CD8-positive, alpha-beta T cell (primary cell): ENCODE measurements at regions of chr11 and their contacts with region 1.

Region 1: GRCh38 chr11:128039140-128040021 is 548.0 kb downstream of the ETS1 start:
- DNase-seq: peak; percentile 48 to 94 (median 79)
- ATAC-seq: peak; percentile 91
- H3K4me3 ChIP-seq: peak overlapping the region; percentile 40 to 50
- H3K4me3 Mint-ChIP-seq: peak overlapping the region; percentile 59
- H3K27ac ChIP-seq: peak overlapping the region; percentile 55 to 80
- H3K27ac Mint-ChIP-seq: peak overlapping the region; percentile 87
- H3K4me1 ChIP-seq: peaks cover 76% of the 10 kb centered on the region
- H3K4me1 Mint-ChIP-seq: peaks cover 56% of the 10 kb centered on the region
- H3K27me3 ChIP-seq: no peaks in the 10 kb centered on the region
- H3K27me3 Mint-ChIP-seq: no peaks in the 10 kb centered on the region
- CTCF ChIP-seq: peak; percentile 22

Region 2: GRCh38 chr11:127412722-127413380 is 626.5 kb before region 1 on chr11:
- CTCF ChIA-PET with region 1: no interaction called
- POLR2A ChIA-PET with region 1: no interaction called
- intact Hi-C with region 1: no loop called
- DNase-seq: no peak
- ATAC-seq: no peak
- H3K4me3 ChIP-seq: no peak overlapping the region
- H3K4me3 Mint-ChIP-seq: no peak overlapping the region
- H3K27ac ChIP-seq: no peak overlapping the region
- H3K27ac Mint-ChIP-seq: no peak overlapping the region
- H3K4me1 ChIP-seq: no peaks in the 10 kb centered on the region
- H3K4me1 Mint-ChIP-seq: no peaks in the 10 kb centered on the region
- H3K27me3 ChIP-seq: no peaks in the 10 kb centered on the region
- H3K27me3 Mint-ChIP-seq: no peaks in the 10 kb centered on the region
- CTCF ChIP-seq: no peak

Region 3: GRCh38 chr11:128052912-128053641 is 13.7 kb after region 1 on chr11:
- CTCF ChIA-PET with region 1: interaction called, 30 read pairs
- POLR2A ChIA-PET with region 1: interaction called, 44 read pairs
- intact Hi-C with region 1: loop called in 1 of 2 experiments (anchors 1 kb)
- DNase-seq: peak in 2 of 9 experiments; percentile 53 to 79
- ATAC-seq: peak; percentile 62
- H3K4me3 ChIP-seq: peak overlapping the region in 1 of 2 experiments; percentile 21
- H3K4me3 Mint-ChIP-seq: peak overlapping the region; percentile 67
- H3K27ac ChIP-seq: peak overlapping the region in 1 of 2 experiments; percentile 79
- H3K27ac Mint-ChIP-seq: peak overlapping the region; percentile 91
- H3K4me1 ChIP-seq: peaks cover 66% of the 10 kb centered on the region
- H3K4me1 Mint-ChIP-seq: peaks cover 82% of the 10 kb centered on the region
- H3K27me3 ChIP-seq: no peaks in the 10 kb centered on the region
- H3K27me3 Mint-ChIP-seq: no peaks in the 10 kb centered on the region
- CTCF ChIP-seq: no peak

Region 4: DNA sequence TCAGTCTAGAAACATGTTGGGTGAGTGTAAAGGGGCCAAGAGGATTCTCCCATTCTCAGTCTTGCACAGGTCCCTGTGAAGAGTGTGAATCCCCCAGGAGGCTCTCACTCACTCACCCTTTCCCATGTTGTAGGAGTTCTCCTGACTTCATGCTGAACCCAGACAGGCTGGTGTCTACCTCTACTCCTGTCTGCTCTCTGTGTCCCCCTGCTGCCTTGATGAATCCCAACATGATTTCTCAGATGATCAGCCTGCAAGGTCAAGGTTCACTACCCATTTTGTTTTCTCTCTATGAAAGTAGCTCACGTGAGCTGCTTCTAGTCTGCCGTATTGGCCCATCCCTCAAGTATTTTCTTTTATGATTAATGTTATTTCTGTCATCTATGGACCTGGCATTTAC is 47.4 kb after region 1 on chr11:
- CTCF ChIA-PET with region 1: interaction called, 5 read pairs
- POLR2A ChIA-PET with region 1: interaction called, 7 read pairs
- intact Hi-C with region 1: loop called in 1 of 2 experiments (anchors 1 kb)
- DNase-seq: peak in 3 of 9 experiments; percentile 24 to 61 (median 47)
- ATAC-seq: peak; percentile 62
- H3K4me3 ChIP-seq: no peak overlapping the region
- H3K4me3 Mint-ChIP-seq: no peak overlapping the region
- H3K27ac ChIP-seq: no peak overlapping the region
- H3K27ac Mint-ChIP-seq: no peak overlapping the region
- H3K4me1 ChIP-seq: peaks cover 25% of the 10 kb centered on the region
- H3K4me1 Mint-ChIP-seq: peaks cover 45% of the 10 kb centered on the region
- H3K27me3 ChIP-seq: no peaks in the 10 kb centered on the region
- H3K27me3 Mint-ChIP-seq: no peaks in the 10 kb centered on the region
- CTCF ChIP-seq: no peak

Region 5: DNA sequence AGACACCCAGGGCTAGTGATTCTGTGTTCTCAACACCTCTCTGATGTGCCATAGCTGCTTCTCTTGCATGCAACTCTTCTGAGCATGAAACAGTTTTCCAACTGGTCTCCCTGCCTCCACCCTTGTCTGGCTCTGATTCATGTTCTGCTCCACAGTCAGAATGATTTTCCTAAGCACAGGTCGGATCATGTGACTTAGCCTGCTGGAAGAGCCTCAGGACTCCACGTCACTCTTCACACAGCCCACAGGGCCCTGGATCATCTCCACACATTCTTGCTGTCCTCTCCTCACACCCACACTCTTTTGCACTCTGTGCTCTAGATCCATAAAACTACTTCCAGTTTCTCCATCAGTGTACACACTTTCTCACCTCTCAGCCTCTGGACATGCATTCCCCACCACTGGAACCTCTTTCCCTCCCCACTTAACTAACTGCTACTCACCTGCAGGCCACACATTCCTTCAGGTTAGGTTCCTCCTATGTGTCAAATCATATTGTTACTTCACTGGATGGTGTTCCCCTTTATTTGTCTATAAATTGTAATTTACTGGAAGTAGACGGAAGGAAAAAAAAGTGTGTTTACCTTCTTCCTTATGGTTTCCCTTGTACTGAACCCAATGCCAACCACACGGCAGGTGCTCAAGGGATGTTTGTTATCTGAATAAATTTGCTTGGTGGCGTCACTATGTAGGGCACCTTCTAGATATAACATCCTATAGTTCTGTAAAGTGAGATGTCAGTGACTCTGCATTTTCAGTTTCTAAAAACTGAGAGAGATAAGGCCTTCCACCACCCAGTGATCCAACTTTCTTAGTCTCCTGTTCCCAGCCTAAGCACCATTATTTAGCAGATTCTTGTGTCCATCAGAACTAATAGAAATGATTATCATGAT is 414.3 kb after region 1 on chr11:
- CTCF ChIA-PET with region 1: no interaction called
- POLR2A ChIA-PET with region 1: no interaction called
- intact Hi-C with region 1: loop called in 1 of 2 experiments (anchors 10 kb)
- DNase-seq: peak in 1 of 9 experiments; percentile 19
- ATAC-seq: peak; percentile 63
- H3K4me3 ChIP-seq: no peak overlapping the region
- H3K4me3 Mint-ChIP-seq: no peak overlapping the region
- H3K27ac ChIP-seq: peak overlapping the region in 1 of 2 experiments; percentile 32
- H3K27ac Mint-ChIP-seq: peak overlapping the region; percentile 91
- H3K4me1 ChIP-seq: peaks cover 25% of the 10 kb centered on the region
- H3K4me1 Mint-ChIP-seq: peaks cover 76% of the 10 kb centered on the region
- H3K27me3 ChIP-seq: no peaks in the 10 kb centered on the region
- H3K27me3 Mint-ChIP-seq: no peaks in the 10 kb centered on the region
- CTCF ChIP-seq: no peak

Region 6: DNA sequence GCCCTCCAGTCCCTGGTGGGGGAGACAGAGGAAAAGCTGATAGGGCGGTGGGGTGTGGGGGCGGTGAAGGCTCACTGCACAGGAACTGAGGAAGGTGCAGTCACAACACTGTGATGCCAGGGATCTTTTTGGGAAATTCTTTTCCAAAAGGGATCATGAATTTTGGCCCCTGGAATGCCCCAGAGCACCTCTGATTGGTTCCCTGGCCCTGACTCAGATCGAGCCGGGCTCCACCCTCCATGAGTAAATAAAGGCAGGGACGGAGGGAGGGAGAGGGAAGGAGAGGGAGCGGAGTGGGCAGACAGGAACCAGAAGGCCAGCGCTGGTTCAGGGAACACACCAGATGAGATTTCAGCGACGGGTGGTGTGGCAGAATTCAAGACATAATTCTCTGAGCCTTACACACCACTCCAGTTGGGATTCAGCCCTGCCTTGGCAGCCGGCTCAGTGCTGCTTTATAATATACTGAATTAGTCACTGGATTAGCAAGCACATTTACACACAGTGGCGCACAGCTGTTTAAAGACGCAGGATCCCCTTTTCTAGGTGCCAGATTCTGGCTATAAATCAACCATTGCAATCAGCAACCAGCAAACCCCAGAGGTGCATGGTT is 467.7 kb after region 1 on chr11:
- CTCF ChIA-PET with region 1: no interaction called
- POLR2A ChIA-PET with region 1: no interaction called
- intact Hi-C with region 1: loop called in 1 of 2 experiments (anchors 10 kb)
- DNase-seq: peak in 4 of 9 experiments; percentile 51 to 65 (median 60)
- ATAC-seq: peak; percentile 30
- H3K4me3 ChIP-seq: peak overlapping the region; percentile 37 to 94
- H3K4me3 Mint-ChIP-seq: peak overlapping the region; percentile 84
- H3K27ac ChIP-seq: peak overlapping the region; percentile 48 to 75
- H3K27ac Mint-ChIP-seq: peak overlapping the region; percentile 98
- H3K4me1 ChIP-seq: peaks cover 100% of the 10 kb centered on the region
- H3K4me1 Mint-ChIP-seq: peaks cover 97% of the 10 kb centered on the region
- H3K27me3 ChIP-seq: no peaks in the 10 kb centered on the region
- H3K27me3 Mint-ChIP-seq: no peaks in the 10 kb centered on the region
- CTCF ChIP-seq: no peak

Region 7: DNA sequence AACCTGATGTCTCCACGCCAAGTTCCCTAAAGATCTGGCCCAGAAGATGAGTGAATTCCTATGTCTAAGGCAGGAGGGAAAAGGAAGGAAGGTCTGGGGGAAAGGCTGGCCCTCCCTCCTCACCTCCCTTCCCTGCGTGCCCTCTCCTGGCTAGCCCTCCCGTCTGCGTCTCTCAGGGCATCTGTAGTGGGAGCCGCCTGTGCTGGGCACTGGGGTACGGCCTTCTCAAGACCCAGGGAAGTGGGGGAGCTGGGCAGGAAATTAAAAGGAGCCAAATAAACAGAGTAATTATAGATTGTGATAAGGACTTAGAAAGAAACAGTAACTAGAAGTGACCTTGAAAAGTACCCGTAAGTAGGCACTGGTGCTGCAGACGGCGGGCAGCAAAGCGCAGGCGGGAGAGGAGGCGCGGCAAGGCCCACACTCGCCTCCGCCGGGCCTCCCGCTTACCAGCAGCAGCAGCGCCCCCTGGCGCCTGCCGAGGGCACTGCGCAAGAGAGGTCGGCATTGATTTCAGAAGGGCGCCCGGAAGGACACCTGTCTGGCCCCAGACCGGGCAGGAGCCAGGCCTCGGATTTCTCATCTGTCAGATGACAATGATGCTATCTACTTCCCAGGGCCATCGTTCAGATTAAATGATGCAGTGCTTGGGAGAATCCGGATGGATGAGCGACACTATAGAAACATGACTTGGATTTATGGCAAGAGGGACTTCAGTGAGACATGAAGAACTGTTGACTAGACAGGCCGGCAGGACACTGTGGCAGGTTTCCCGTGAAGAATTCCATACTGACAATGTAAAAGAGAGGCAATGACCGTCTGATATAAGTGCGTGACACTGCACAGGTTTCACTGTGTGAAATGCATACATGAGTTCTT is 820.4 kb after region 1 on chr11:
- CTCF ChIA-PET with region 1: interaction called, 4 read pairs
- POLR2A ChIA-PET with region 1: no interaction called
- intact Hi-C with region 1: loop called in 1 of 2 experiments (anchors 5 kb)
- DNase-seq: peak; percentile 64 to 83 (median 75)
- ATAC-seq: peak; percentile 97
- H3K4me3 ChIP-seq: no peak overlapping the region
- H3K4me3 Mint-ChIP-seq: no peak overlapping the region
- H3K27ac ChIP-seq: no peak overlapping the region
- H3K27ac Mint-ChIP-seq: no peak overlapping the region
- H3K4me1 ChIP-seq: no peaks in the 10 kb centered on the region
- H3K4me1 Mint-ChIP-seq: peaks cover 4% of the 10 kb centered on the region
- H3K27me3 ChIP-seq: no peaks in the 10 kb centered on the region
- H3K27me3 Mint-ChIP-seq: peaks cover 2% of the 10 kb centered on the region
- CTCF ChIP-seq: peak; percentile 99

Region 8: GRCh38 chr11:128956401-128957201 is 917.2 kb after region 1 on chr11:
- CTCF ChIA-PET with region 1: no interaction called
- POLR2A ChIA-PET with region 1: no interaction called
- intact Hi-C with region 1: loop called in 1 of 2 experiments (anchors 5 kb)
- DNase-seq: peak in 3 of 9 experiments; percentile 12 to 66 (median 59)
- ATAC-seq: no peak
- H3K4me3 ChIP-seq: no peak overlapping the region
- H3K4me3 Mint-ChIP-seq: no peak overlapping the region
- H3K27ac ChIP-seq: no peak overlapping the region
- H3K27ac Mint-ChIP-seq: no peak overlapping the region
- H3K4me1 ChIP-seq: no peaks in the 10 kb centered on the region
- H3K4me1 Mint-ChIP-seq: peaks cover 2% of the 10 kb centered on the region
- H3K27me3 ChIP-seq: no peaks in the 10 kb centered on the region
- H3K27me3 Mint-ChIP-seq: peaks cover 8% of the 10 kb centered on the region
- CTCF ChIP-seq: peak; percentile 70